ENCODE measurements at regions of chr6 and their contacts with region 1.

Region 1: DNA sequence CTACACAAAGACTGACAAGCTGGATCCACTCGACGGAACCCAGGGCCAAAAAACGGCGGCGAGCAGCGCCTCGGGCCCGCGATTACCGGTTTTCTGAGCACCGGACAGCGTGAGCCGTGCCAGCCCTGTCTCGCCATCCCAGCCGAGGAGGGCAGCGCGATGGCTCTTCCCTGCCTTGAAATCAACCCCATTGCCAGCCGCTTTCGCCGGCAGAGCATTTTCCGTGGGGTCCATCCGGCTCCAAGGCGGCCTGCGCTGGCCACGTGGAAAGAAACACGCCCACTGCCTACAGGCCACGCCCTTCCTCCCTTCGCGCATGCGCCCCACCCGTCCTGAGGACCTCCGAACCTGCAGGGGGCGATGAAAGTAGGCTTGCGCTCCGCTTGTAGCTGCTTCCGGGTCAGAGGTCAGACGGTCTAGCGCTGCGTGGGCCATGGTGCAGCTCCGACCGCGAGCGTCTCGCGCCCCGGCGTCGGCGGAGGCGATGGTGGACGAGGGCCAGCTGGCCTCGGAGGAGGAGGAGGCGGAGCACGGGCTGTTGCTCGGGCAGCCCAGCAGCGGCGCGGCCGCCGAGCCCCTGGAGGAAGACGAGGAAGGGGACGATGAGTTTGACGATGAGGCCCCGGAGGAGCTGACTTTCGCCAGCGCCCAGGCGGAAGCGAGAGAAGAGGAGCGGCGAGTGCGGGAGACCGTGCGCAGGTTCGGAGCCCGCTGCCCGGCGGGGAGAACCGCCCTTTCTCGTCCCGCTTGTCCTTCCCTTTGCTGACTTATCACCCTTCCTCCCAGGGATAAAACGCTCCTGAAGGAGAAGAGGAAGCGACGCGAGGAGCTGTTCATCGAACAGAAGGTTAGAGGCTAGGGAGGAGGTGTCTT is at the start of gene NOL7:
- DNase-seq: peak; percentile 96 to 99 (median 99)
- ATAC-seq: peak; percentile 93
- H3K4me3 ChIP-seq: peak within 1 kb of the TSS; percentile 86 to 97
- H3K4me3 Mint-ChIP-seq: peak within 1 kb of the TSS; percentile 99
- H3K27ac ChIP-seq: peak within 1 kb of the TSS; percentile 83 to 88
- H3K27ac Mint-ChIP-seq: peak within 1 kb of the TSS; percentile 98
- H3K4me1 ChIP-seq: peaks cover 28% of the 10 kb centered on the region
- H3K4me1 Mint-ChIP-seq: peaks cover 39% of the 10 kb centered on the region
- H3K27me3 ChIP-seq: no peaks in the 10 kb centered on the region
- H3K27me3 Mint-ChIP-seq: no peaks in the 10 kb centered on the region
- CTCF ChIP-seq: peak; percentile 94
- total RNA-seq, gene NOL7: 70.5 to 71.1 TPM

Region 2: DNA sequence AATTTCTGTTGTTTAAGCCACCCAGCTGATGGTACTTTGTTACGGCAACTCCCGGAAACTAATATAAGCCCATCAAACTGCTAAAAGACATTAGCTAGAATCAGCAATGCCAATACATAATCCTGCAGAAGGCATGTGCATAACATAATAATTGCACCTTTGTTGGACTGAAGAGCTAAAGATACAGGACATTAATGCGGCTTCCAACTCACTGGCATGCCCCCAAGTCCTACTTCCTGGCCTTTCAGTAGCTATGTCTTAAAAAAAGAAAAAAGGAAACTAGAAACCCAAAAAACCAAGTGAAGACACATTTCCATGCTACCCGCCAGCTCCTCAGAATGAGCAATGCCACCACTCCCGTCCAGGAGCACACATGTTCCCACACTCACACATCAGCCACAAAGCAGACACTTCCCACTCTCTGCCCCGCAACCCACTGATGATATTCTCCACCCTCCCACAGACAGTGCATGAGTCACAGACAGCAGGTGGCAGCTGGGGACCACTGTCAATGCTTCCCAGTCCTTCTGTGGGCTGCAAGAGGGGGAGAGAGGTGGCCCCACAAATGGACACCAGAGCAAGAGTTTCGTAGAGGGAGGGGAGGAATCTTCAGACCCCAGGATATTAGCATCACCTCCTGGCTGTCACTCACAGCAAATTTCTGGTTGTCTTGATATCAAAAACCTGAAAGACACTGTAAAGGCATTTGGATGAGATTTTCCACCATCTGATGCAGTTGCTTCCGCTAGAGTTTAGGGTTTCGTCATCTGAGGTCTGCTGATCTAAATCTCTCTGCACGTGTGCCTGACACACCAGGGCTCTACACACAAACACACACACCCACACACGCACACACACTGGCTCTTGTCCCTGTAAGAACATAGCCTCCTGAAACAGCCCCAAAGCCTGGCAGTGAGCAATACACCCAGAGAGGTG is 160.6 kb before region 1 on chr6:
- CTCF ChIA-PET with region 1: interaction called, 4 read pairs
- POLR2A ChIA-PET with region 1: interaction called, 3 read pairs
- intact Hi-C with region 1: loop called in 1 of 2 experiments (anchors 10 kb)
- DNase-seq: peak; percentile 31 to 92 (median 70)
- ATAC-seq: peak; percentile 80
- H3K4me3 ChIP-seq: peak overlapping the region; percentile 10 to 26
- H3K4me3 Mint-ChIP-seq: peak overlapping the region; percentile 62
- H3K27ac ChIP-seq: peak overlapping the region; percentile 18 to 77
- H3K27ac Mint-ChIP-seq: peak overlapping the region; percentile 90
- H3K4me1 ChIP-seq: peaks cover 31% of the 10 kb centered on the region
- H3K4me1 Mint-ChIP-seq: peaks cover 36% of the 10 kb centered on the region
- H3K27me3 ChIP-seq: no peaks in the 10 kb centered on the region
- H3K27me3 Mint-ChIP-seq: no peaks in the 10 kb centered on the region
- CTCF ChIP-seq: peak; percentile 25

Region 3: DNA sequence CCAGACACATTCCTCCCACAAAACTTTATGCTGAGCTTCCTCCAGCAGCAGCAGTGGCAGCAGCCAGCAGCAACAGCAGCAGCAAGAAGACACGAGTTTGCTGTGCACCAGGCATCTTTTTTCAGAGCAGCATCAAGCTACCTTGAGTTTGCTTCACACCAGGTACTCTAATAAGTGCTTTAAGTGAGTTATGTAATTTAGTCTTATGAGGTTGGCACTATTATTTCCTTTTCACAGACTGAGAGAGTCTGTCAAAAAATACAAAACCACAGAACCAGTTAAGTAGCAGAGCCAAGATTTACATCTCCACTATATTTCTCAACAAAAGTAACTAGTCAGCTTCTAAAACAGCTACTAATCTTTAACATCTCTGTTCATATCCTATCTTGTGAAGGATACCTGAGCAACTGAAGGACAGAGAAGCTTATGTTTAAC is 72.8 kb after region 1 on chr6:
- CTCF ChIA-PET with region 1: interaction called, 5 read pairs
- POLR2A ChIA-PET with region 1: interaction called, 12 read pairs
- intact Hi-C with region 1: no loop called
- DNase-seq: peak in 5 of 9 experiments; percentile 26 to 69 (median 28)
- ATAC-seq: peak; percentile 80
- H3K4me3 ChIP-seq: peak overlapping the region in 1 of 2 experiments; percentile 22
- H3K4me3 Mint-ChIP-seq: peak overlapping the region; percentile 70
- H3K27ac ChIP-seq: peak overlapping the region; percentile 33 to 73
- H3K27ac Mint-ChIP-seq: peak overlapping the region; percentile 97
- H3K4me1 ChIP-seq: peaks cover 56% of the 10 kb centered on the region
- H3K4me1 Mint-ChIP-seq: peaks cover 73% of the 10 kb centered on the region
- H3K27me3 ChIP-seq: no peaks in the 10 kb centered on the region
- H3K27me3 Mint-ChIP-seq: no peaks in the 10 kb centered on the region
- CTCF ChIP-seq: no peak

Region 4: GRCh38 chr6:13742961-13743735 is 128.0 kb after region 1 on chr6:
- CTCF ChIA-PET with region 1: no interaction called
- POLR2A ChIA-PET with region 1: no interaction called
- intact Hi-C with region 1: no loop called
- DNase-seq: no peak
- ATAC-seq: no peak
- H3K4me3 ChIP-seq: no peak overlapping the region
- H3K4me3 Mint-ChIP-seq: peak overlapping the region; percentile 37
- H3K27ac ChIP-seq: no peak overlapping the region
- H3K27ac Mint-ChIP-seq: no peak overlapping the region
- H3K4me1 ChIP-seq: no peaks in the 10 kb centered on the region
- H3K4me1 Mint-ChIP-seq: no peaks in the 10 kb centered on the region
- H3K27me3 ChIP-seq: no peaks in the 10 kb centered on the region
- H3K27me3 Mint-ChIP-seq: no peaks in the 10 kb centered on the region
- CTCF ChIP-seq: no peak

Region 5: DNA sequence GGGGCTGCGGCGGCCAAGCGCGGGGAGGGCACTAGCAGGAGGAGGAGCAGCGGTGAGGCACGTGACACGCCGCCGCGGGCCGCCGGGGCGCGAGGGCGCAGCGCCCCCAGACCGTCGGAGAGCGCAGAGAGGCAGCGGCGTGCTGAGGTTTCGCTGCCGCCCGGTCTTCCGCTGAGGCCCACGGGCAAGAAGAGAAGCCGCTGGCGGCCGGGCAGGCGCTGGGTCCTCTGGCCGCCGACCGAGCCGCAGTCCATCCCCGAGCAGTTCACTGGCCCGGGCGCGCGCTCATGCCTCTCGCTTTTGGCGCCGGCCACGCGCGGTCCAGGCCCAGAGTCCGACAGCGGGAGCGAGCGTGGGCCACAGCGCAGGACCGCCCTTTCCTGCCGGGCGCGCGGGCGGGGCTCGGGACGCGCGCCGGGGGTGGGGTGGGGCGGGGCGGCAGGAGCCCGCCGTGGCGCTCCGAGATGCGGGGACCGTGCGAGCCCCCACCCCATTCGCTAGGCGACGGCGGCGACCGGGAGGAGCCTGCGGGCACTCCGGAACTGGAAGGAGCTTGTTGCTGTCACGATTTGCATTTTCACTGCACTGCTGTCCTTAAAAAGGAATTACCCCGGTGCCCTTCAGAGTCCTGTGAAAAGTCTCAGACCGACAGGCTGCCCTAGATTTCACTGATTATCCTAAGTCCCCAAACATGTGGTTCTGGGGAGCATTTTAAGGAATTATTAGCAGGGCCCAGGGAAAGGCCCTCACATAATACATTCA is 199.2 kb after region 1 on chr6 and contains the start of gene MCUR1:
- CTCF ChIA-PET with region 1: interaction called, 5 read pairs
- POLR2A ChIA-PET with region 1: interaction called, 3 read pairs
- intact Hi-C with region 1: loop called (anchors 1 kb)
- DNase-seq: peak; percentile 51 to 92 (median 74)
- ATAC-seq: peak; percentile 80
- H3K4me3 ChIP-seq: peak within 1 kb of the TSS; percentile 71
- H3K4me3 Mint-ChIP-seq: peak within 1 kb of the TSS; percentile 87
- H3K27ac ChIP-seq: peak within 1 kb of the TSS; percentile 61 to 76
- H3K27ac Mint-ChIP-seq: peak within 1 kb of the TSS; percentile 85
- H3K4me1 ChIP-seq: peaks cover 14% of the 10 kb centered on the region
- H3K4me1 Mint-ChIP-seq: peaks cover 34% of the 10 kb centered on the region
- H3K27me3 ChIP-seq: no peaks in the 10 kb centered on the region
- H3K27me3 Mint-ChIP-seq: no peaks in the 10 kb centered on the region
- CTCF ChIP-seq: no peak
- total RNA-seq, gene MCUR1: 2.1 to 3.4 TPM